A673 (cell line): ENCODE measurements at regions of chr14 and their contacts with region 1.

Region 1: DNA sequence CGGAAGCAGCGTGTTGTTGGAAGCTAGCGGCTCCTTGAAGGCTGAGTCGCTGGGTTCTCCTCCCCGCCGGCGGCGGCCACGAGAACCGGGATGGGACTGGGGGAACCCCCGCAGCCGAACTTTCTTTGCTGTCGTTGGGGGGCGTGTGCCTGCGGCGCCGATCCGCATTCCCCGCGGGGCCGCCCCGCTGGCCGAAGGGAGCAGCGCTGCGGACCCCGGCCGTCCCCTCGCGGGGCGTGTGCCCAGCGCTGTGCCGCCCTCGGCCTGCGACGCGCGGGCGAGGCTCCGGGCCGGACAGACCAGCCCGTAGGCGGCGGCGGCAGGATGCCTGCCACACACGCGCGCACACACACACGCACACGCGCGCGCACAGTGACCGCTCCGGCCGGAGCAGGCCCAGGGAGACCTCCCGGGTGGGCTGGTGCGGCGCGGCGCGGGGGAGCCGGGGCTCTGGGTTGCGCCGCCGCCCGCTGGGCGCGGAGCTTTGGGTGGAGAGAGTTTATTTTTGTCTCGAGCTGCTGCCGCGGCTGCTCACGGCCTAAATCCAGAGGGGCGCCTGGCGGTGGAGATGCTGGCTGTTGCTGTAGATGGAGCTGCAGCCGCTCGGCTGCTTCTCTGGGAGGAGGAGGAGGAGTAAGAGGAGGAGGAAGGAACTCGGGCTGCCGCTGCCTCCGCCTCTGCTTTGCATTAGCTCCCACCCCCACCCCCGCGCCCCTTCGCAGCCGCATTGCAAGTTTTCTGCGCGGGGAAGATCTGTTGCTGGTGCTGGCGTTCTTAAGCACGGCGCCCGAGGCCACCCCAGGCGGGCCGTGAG is at the start of gene SAMD4A:
- DNase-seq: peak; percentile 92
- H3K4me3 ChIP-seq: peak within 1 kb of the TSS; percentile 87
- H3K27ac ChIP-seq: peak within 1 kb of the TSS; percentile 77
- H3K4me1 ChIP-seq: peaks cover 28% of the 10 kb centered on the region
- H3K27me3 ChIP-seq: no peaks in the 10 kb centered on the region
- CTCF ChIP-seq: peak; percentile 44
- total RNA-seq, gene SAMD4A: 19.8 and 26.5 TPM in 2 replicates

Region 2: GRCh38 chr14:53528185-53528671 is 1038.4 kb before region 1 on chr14:
- CTCF ChIA-PET with region 1: no interaction called
- POLR2A ChIA-PET with region 1: no interaction called
- intact Hi-C with region 1: no loop called
- DNase-seq: no peak
- H3K4me3 ChIP-seq: no peak overlapping the region
- H3K27ac ChIP-seq: no peak overlapping the region
- H3K4me1 ChIP-seq: no peaks in the 10 kb centered on the region
- H3K27me3 ChIP-seq: peaks cover 9% of the 10 kb centered on the region
- CTCF ChIP-seq: no peak

Region 3: GRCh38 chr14:54549862-54550261 is 16.8 kb before region 1 on chr14:
- CTCF ChIA-PET with region 1: no interaction called
- POLR2A ChIA-PET with region 1: no interaction called
- intact Hi-C with region 1: no loop called
- DNase-seq: no peak
- H3K4me3 ChIP-seq: no peak overlapping the region
- H3K27ac ChIP-seq: no peak overlapping the region
- H3K4me1 ChIP-seq: no peaks in the 10 kb centered on the region
- H3K27me3 ChIP-seq: no peaks in the 10 kb centered on the region
- CTCF ChIP-seq: no peak

Region 4: GRCh38 chr14:54606178-54606577 is 39.6 kb after region 1 on chr14:
- CTCF ChIA-PET with region 1: no interaction called
- POLR2A ChIA-PET with region 1: no interaction called
- intact Hi-C with region 1: no loop called
- DNase-seq: peak; percentile 21
- H3K4me3 ChIP-seq: no peak overlapping the region
- H3K27ac ChIP-seq: no peak overlapping the region
- H3K4me1 ChIP-seq: peaks cover 11% of the 10 kb centered on the region
- H3K27me3 ChIP-seq: no peaks in the 10 kb centered on the region
- CTCF ChIP-seq: no peak

Region 5: GRCh38 chr14:54642801-54643697 is 76.4 kb after region 1 on chr14:
- CTCF ChIA-PET with region 1: interaction called, 3 read pairs
- POLR2A ChIA-PET with region 1: interaction called, 3 read pairs
- intact Hi-C with region 1: loop called (anchors 5 kb)
- DNase-seq: peak; percentile 41
- H3K4me3 ChIP-seq: no peak overlapping the region
- H3K27ac ChIP-seq: no peak overlapping the region
- H3K4me1 ChIP-seq: peaks cover 10% of the 10 kb centered on the region
- H3K27me3 ChIP-seq: no peaks in the 10 kb centered on the region
- CTCF ChIP-seq: peak; percentile 49

Region 6: GRCh38 chr14:54722781-54723432 is 156.3 kb after region 1 on chr14:
- CTCF ChIA-PET with region 1: interaction called, 7 read pairs
- POLR2A ChIA-PET with region 1: interaction called, 4 read pairs
- intact Hi-C with region 1: loop called (anchors 2 kb)
- DNase-seq: peak; percentile 83
- H3K4me3 ChIP-seq: no peak overlapping the region
- H3K27ac ChIP-seq: peak overlapping the region; percentile 28
- H3K4me1 ChIP-seq: peaks cover 39% of the 10 kb centered on the region
- H3K27me3 ChIP-seq: no peaks in the 10 kb centered on the region
- CTCF ChIP-seq: peak; percentile 64

Region 7: DNA sequence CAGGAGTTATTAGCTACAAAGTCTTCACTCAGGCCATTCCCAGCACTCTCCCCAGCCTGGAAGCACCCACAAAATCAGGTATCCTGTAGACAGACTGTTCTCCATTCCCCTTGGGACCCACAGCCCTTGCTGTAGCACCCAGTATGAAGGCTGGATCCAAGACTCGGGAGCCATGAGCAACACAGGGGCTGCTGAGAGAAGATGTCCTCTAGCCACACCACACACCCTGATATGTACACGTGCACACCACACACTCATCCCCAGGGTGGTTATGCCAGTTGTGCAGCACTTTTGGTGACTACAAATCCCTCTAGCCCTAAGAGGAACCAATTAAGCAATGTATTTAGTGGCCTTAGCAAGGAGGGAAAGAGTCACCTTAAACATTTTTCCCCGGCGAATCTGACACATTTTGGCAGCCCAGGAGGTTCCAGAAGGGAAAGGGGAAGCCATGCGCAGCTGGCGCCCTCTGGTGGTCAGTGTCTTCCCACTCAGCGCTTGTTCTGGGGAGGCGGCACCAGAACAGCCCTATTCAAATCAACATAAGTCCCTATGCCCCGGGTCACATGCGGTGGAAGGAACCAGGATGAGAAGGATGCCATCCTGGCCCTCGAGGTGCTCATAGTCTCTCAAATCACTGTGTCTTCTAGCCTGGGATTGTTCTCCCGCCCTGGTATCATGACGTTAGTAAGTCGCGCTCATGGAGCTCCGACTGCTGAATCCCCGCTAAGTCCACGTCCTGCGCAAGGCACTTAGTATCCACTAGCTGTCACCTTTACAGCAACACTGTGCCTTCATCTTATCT is 239.1 kb after region 1 on chr14:
- CTCF ChIA-PET with region 1: interaction called, 10 read pairs
- POLR2A ChIA-PET with region 1: no interaction called
- intact Hi-C with region 1: loop called (anchors 2 kb)
- DNase-seq: peak; percentile 90
- H3K4me3 ChIP-seq: no peak overlapping the region
- H3K27ac ChIP-seq: no peak overlapping the region
- H3K4me1 ChIP-seq: peaks cover 3% of the 10 kb centered on the region
- H3K27me3 ChIP-seq: no peaks in the 10 kb centered on the region
- CTCF ChIP-seq: peak; percentile 95